Activated CD4-positive, alpha-beta memory T cell treated with anti-CD3 and anti-CD28 coated beads, Interleukin-2, amount 10 ng/mL, durations not matched to agents 7 days and 5 days (primary cell): ENCODE measurements at regions of chr10 and their contacts with region 1.

Region 1: DNA sequence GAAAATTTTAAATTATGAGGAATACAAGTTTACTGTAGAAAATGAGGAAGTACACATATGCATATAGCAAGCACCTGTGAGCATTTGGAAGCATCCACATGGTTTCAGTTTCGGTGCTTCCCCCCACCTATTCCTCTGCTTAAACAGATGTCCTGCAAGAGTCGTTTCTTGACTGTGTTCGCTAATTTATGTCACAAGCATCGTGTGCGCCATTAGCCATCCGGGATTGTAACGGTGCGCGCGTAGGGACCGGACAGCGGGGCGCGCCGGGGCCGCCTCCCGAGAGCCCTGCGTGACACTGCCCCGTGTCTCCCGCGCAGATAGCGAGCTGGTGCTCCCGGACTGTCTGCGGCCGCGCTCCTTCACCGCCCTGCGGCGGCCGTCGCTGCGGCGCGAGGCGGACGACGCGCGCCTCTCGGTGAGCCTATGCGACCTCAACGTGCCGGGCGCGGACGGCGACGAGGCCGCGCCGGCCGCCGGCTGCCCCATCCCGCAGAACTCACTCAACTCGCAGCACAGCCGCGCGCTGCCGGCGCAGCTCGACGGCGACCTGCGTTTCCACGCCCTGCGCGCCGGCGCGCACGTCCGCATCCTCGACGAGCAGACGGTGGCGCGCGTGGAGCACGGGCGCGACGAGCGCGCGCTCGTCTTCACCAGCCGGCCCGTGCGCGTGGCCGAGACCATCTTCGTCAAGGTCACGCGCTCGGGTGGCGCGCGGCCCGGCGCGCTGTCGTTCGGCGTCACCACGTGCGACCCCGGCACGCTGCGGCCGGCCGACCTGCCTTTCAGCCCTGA is 90.9 kb downstream of the NEURL1 start:
- DNase-seq: peak; percentile 84
- H3K4me3 Mint-ChIP-seq: peak overlapping the region; percentile 87
- H3K27ac Mint-ChIP-seq: peak overlapping the region; percentile 83
- H3K4me1 Mint-ChIP-seq: peaks cover 21% of the 10 kb centered on the region
- H3K27me3 Mint-ChIP-seq: peaks cover 4% of the 10 kb centered on the region

Region 2: DNA sequence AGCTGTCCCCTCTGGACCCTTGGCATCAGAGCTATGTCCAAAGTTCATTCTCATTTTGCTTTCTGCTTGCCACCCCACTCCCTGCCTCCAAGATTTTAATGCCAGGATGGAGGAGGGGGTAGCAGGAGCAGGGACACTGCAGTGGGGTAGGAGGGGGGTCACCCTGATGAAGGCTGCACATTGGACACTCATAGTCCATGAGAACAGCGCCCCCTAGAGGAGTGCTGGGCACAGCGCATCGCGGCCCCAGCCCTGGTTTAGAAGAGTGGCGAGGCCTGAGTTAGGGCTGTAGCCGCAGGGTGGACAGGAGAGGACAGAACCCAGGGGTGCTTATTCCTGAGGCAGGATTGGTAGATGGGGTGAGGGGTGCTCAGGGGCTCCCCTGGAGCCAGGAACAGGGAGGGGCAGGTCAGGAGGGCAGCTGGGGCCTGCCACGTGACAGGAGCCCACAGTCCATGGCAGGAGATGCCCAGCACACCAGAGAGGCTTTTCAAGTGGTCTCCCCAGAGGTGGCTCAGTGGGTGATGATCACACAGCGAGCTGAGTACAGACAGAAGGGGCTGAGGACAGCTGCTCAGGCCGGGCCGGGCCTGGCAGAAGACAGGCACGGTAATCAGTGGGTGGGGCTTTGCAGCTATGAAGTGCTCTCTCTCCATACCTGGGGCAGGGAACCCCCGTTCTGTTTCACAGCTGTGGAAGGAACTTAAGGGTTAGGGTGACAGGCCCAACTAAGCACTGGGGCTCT is 19.5 kb before region 1 on chr10:
- CTCF ChIA-PET with region 1: interaction called, 10 read pairs
- POLR2A ChIA-PET with region 1: interaction called, 3 read pairs
- DNase-seq: peak; percentile 49
- H3K4me3 Mint-ChIP-seq: no peak overlapping the region
- H3K27ac Mint-ChIP-seq: no peak overlapping the region
- H3K4me1 Mint-ChIP-seq: no peaks in the 10 kb centered on the region
- H3K27me3 Mint-ChIP-seq: peaks cover 6% of the 10 kb centered on the region

Region 3: DNA sequence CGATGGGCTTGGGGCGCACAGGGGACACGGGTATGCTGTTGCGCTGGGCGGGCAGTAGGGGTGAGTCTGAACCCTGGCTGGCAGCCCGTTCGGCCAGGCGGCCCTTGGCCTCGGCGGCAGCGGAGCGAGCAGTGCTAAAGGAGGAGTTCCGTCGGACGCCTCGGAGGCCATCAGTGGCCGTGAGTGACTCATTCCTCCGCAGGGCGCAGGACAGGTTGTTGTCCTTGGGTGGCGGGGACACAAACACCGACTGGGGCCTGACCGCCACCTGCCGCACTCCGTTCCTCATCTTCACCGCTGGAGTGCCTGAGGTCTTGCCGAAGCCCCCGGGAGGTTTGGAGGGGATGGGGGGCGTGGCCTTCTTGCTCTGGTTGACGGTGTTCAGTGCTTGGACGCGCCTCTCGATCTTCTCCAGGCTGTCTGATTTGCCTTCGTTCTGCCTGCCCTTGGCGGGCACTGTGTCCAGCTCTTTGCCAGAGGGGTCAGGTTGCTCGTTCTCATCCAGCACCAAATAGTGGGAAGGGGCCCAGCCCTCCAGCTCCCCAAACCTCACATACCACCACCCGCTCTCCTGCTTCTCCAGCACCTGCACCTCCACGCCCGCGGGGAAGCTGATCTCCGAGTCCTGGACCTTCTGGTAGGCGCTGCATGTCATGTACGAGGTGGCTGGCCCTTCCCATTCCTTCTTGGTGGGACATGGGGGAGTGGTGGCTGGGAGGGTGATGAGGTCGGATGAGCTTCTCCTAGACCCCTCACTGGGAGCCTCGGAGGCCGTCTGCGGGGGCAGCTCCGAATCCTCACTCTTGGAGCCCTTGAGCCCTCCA is 17.8 kb after region 1 on chr10:
- CTCF ChIA-PET with region 1: no interaction called
- POLR2A ChIA-PET with region 1: no interaction called
- DNase-seq: no peak
- H3K4me3 Mint-ChIP-seq: no peak overlapping the region
- H3K27ac Mint-ChIP-seq: no peak overlapping the region
- H3K4me1 Mint-ChIP-seq: no peaks in the 10 kb centered on the region
- H3K27me3 Mint-ChIP-seq: no peaks in the 10 kb centered on the region

Region 4: GRCh38 chr10:103918053-103918846 is 333.8 kb after region 1 on chr10 and contains the start of gene STN1:
- CTCF ChIA-PET with region 1: no interaction called
- POLR2A ChIA-PET with region 1: no interaction called
- DNase-seq: peak; percentile 97
- H3K4me3 Mint-ChIP-seq: peak within 1 kb of the TSS; percentile 91
- H3K27ac Mint-ChIP-seq: peak within 1 kb of the TSS; percentile 93
- H3K4me1 Mint-ChIP-seq: peaks cover 37% of the 10 kb centered on the region
- H3K27me3 Mint-ChIP-seq: no peaks in the 10 kb centered on the region
- total RNA-seq, gene STN1: 55.1 to 56.8 TPM